ENCODE measurements at regions of chr5 and their contacts with region 1.

Region 1: DNA sequence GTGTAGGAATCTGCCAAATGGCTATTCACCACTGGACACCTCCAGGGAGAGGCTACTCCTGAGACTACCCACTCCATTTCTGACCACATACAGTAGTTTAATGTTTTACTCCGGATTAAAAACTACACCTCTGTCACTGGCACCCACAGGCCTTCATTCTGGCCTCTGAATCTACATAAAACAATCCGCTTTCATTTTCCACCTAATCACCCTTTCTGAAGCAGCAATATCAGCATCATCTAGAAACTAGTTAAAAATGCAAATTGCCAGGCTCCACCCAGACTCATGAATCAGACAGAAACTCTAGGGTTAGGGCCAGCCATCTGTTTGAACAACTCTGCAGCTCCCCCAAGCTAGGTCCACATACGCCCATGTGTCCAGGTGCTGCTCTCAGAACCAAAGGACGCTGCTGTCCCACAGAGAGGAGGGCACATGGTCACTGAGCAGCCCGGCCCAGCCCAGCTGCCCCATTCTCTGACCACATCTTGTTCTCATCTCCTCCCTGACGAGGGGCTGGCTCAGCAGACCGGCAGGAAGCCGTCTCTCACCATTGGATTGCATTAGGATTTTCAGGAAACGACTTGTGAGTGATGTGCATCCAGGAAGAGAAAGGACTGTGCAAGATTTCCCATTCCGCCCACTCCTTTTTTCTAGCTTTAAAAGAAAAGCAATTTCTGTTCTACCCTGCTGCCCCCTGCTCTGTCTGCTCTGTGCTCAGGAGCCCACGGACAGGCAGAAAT is 34.7 kb downstream of the ADAM19 start:
- DNase-seq: peak; percentile 77
- ATAC-seq: peak; percentile 93
- H3K4me3 ChIP-seq: peak overlapping the region in 3 of 5 experiments; percentile 2 to 45 (median 42)
- H3K4me3 Mint-ChIP-seq: peak overlapping the region; percentile 70
- H3K27ac ChIP-seq: peak overlapping the region; percentile 69 to 80
- H3K27ac Mint-ChIP-seq: peak overlapping the region; percentile 84
- H3K4me1 ChIP-seq: peaks cover 69 to 72% of the 10 kb centered on the region in 2 donors
- H3K4me1 Mint-ChIP-seq: peaks cover 82% of the 10 kb centered on the region
- H3K27me3 ChIP-seq: no peaks in the 10 kb centered on the region
- H3K27me3 Mint-ChIP-seq: no peaks in the 10 kb centered on the region
- CTCF ChIP-seq: no peak

Region 2: DNA sequence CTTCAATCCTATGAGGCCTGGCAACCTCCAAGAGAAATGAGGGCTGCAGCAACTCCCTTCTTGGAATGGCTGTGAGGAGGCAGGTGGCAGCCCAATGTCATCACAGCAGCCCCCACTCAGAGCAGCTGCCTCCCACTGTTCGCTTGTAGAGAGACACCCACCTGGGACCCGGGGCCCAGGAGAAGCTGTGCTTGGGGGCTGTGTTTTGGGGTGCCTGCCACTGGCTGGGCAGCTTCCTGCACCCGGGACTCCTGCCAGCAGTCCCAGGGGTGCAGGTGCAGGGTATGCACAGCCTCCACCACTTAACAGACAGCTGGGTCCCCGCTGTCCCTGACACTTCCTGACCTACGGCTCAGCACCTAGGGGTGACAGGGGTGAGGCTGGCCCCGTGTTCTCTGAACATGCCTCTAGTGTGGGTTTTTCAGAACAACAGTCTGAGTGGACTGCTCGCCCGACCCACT is 54.6 kb before region 1 on chr5:
- CTCF ChIA-PET with region 1: interaction called, 5 read pairs
- POLR2A ChIA-PET with region 1: interaction called, 3 read pairs
- intact Hi-C with region 1: loop called (anchors 1 kb)
- DNase-seq: peak; percentile 66
- ATAC-seq: peak; percentile 46
- H3K4me3 ChIP-seq: peak overlapping the region in 1 of 5 experiments; percentile 20
- H3K4me3 Mint-ChIP-seq: peak overlapping the region; percentile 65
- H3K27ac ChIP-seq: peak overlapping the region; percentile 94 to 100
- H3K27ac Mint-ChIP-seq: peak overlapping the region; percentile 95
- H3K4me1 ChIP-seq: peaks cover 66 to 77% of the 10 kb centered on the region in 2 donors
- H3K4me1 Mint-ChIP-seq: peaks cover 82% of the 10 kb centered on the region
- H3K27me3 ChIP-seq: no peaks in the 10 kb centered on the region
- H3K27me3 Mint-ChIP-seq: no peaks in the 10 kb centered on the region
- CTCF ChIP-seq: no peak

Region 3: DNA sequence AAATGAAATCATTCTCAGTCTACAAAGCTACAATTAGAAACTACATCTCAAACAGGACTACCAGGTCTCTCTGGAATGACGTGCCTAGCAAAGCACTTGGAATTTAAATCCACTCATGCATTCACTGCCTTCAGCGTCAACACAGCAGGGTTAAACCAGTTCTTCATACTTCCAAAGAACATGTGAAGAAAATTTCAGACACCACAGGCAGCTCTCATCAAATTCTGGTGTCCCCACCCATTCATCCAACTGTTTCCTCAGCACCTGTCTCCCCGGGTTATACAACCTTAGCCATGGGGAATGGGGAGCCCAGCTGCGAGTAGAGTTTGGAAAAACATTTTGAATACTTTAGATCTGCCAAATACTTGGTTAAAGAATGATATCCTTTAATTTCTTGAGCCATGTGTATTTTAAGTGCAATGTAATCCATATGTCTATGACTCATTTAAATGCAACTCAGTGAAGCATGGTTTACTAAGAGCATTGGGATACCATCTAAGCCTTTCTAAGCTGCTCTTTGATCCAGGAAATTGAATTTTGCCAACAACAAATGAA is 17.2 kb after region 1 on chr5:
- CTCF ChIA-PET with region 1: interaction called, 6 read pairs
- POLR2A ChIA-PET with region 1: interaction called, 3 read pairs
- intact Hi-C with region 1: loop called (anchors 2 kb)
- DNase-seq: no peak
- ATAC-seq: no peak
- H3K4me3 ChIP-seq: no peak overlapping the region
- H3K4me3 Mint-ChIP-seq: peak overlapping the region; percentile 23
- H3K27ac ChIP-seq: peak overlapping the region; percentile 30 to 69
- H3K27ac Mint-ChIP-seq: peak overlapping the region; percentile 85
- H3K4me1 ChIP-seq: peaks cover 84 to 87% of the 10 kb centered on the region in 2 donors
- H3K4me1 Mint-ChIP-seq: peaks cover 90% of the 10 kb centered on the region
- H3K27me3 ChIP-seq: no peaks in the 10 kb centered on the region
- H3K27me3 Mint-ChIP-seq: no peaks in the 10 kb centered on the region
- CTCF ChIP-seq: no peak

Region 4: DNA sequence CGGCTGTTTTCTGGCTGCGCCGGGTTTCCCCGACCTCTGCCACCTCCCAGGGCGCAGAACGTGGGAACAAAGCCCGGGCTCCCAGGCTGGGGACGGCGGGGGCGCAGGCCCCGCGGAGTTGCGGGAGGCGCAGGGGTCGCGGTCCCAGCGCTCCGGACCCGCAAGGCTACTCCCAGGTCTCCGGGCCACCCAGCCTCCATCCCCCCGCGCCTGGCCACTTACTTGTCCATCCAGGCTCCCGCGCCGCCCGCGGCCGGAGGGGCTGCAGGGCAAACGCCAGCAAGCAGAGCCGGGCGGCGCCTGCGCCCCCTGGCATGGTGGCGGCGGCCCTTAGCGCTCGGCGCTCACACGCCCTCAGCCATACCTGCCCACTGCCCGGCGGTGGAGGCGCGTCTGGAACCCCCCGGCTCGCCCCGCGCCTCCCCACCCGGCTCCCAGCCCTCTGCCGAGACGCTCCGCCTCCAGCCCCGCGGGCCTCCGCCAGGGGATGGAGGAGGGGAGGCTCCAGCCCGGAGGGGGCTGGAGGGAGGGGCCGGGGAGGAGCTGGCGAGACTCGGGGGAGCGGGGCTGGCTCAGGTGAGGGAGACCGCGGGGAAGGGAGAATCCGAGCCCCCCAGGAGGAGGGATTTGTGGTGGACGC is 34.6 kb after region 1 on chr5 and contains the start of gene ADAM19:
- CTCF ChIA-PET with region 1: interaction called, 8 read pairs
- POLR2A ChIA-PET with region 1: interaction called, 8 read pairs
- intact Hi-C with region 1: loop called (anchors 1 kb)
- DNase-seq: peak; percentile 67
- ATAC-seq: peak; percentile 47
- H3K4me3 ChIP-seq: peak within 1 kb of the TSS; percentile 94 to 99 (median 99)
- H3K4me3 Mint-ChIP-seq: peak within 1 kb of the TSS; percentile 96
- H3K27ac ChIP-seq: peak within 1 kb of the TSS; percentile 79 to 84
- H3K27ac Mint-ChIP-seq: peak within 1 kb of the TSS; percentile 95
- H3K4me1 ChIP-seq: peaks cover 44 to 65% of the 10 kb centered on the region in 2 donors
- H3K4me1 Mint-ChIP-seq: peaks cover 70% of the 10 kb centered on the region
- H3K27me3 ChIP-seq: no peaks in the 10 kb centered on the region
- H3K27me3 Mint-ChIP-seq: no peaks in the 10 kb centered on the region
- CTCF ChIP-seq: peak; percentile 18
- total RNA-seq, gene ADAM19: 171 TPM in 2 replicates

Region 5: DNA sequence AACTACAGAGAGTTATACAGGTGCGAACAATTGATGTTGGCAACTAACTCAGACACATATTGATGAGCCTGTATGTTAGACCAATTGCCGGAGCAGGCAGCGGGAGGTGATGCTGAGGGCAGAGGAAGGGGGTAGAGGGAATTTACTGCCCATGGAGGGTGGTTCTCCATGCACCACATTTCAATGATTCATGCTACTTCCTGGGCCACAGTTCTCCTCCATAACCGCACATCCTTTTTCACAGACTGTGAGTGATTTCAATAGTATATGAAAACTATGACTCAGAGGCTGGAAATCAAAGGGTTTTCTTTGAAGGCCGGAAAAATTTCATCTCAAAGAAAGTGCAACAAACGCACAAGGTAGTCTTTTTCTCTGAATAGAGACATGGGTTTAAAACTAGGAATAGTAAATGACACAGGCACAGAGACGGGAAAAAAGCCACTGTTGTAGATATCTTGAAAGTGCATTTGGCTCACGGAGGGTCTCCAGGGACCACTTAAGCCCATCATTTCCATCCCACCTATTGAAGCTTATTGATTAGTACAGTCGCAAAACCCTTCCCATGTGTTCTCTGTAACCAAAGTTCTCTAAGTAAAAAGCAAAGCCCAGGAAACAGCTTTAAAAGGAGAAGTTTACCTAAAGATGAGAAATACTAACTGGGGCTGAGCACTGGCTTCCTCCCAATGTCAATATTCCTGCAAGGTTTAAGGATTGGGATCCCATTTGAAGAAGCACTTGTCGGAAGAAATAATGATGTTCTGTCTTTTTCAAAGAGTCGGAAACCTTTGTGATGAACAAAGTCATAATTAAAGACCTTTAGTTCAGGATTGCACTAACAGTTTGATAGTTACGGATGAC is 62.7 kb after region 1 on chr5:
- CTCF ChIA-PET with region 1: no interaction called
- POLR2A ChIA-PET with region 1: no interaction called
- intact Hi-C with region 1: loop called (anchors 2 kb)
- DNase-seq: peak; percentile 38
- ATAC-seq: peak; percentile 14
- H3K4me3 ChIP-seq: no peak overlapping the region
- H3K4me3 Mint-ChIP-seq: peak overlapping the region; percentile 20
- H3K27ac ChIP-seq: peak overlapping the region; percentile 65 to 77
- H3K27ac Mint-ChIP-seq: peak overlapping the region; percentile 81
- H3K4me1 ChIP-seq: peaks cover 71 to 73% of the 10 kb centered on the region in 2 donors
- H3K4me1 Mint-ChIP-seq: peaks cover 73% of the 10 kb centered on the region
- H3K27me3 ChIP-seq: no peaks in the 10 kb centered on the region
- H3K27me3 Mint-ChIP-seq: no peaks in the 10 kb centered on the region
- CTCF ChIP-seq: no peak

Measured in B cell (primary cell).